ENCODE measurements at regions of chr1 and their contacts with region 1.

Region 1: DNA sequence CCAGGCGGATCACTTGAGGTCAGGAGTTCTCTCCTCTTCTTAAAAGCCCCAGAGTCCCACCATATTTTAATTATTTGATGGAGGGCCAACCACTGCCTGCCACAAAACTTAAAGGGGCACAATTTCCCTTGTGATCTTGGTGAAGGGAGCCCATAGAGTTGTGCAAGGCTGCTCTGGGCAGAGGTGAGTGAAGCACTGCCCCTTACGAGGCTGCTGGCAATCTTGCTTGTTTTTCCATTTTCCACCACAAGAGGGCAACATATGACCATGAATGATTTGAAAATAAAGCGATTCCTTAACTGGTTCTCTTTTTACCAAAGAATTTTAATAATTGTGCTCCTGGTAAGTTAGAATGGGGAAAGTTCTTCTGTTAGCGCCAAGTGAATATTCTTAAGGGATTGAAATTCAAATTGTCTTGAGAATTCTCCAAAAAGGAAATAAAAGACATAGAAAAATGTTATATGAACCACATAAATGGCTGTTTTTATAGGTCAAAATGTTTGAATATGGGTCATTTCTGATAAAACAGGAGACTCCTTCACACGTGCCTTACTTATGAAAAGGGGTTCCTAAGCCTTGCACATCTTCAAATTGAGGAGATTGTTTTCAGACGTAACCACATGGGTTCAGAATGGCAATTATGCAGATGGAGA is 22.7 kb downstream of the PGM1 start:
- DNase-seq: peak; percentile 50 to 74
- ATAC-seq: peak; percentile 27 to 38
- H3K4me3 ChIP-seq: no peak overlapping the region
- H3K27ac ChIP-seq: peak overlapping the region; percentile 91 to 99 (median 96)
- H3K4me1 ChIP-seq: peaks cover 78 to 94% of the 10 kb centered on the region in 2 donors
- H3K27me3 ChIP-seq: no peaks in the 10 kb centered on the region
- CTCF ChIP-seq: peak; percentile 73 to 86 (median 84)
- POLR2A ChIP-seq: no peak

Region 2: GRCh38 chr1:63575340-63575826 is 40.5 kb before region 1 on chr1:
- in situ Hi-C with region 1: loop called in 2 of 4 experiments (anchors 5 to 10 kb)
- intact Hi-C with region 1: loop called (anchors 5 kb)
- DNase-seq: no peak
- ATAC-seq: peak; percentile 89 to 94
- H3K4me3 ChIP-seq: no peak overlapping the region
- H3K27ac ChIP-seq: peak overlapping the region in 1 of 4 donors; percentile 33
- H3K4me1 ChIP-seq: peaks cover 0 to 5% of the 10 kb centered on the region in 2 donors
- H3K27me3 ChIP-seq: no peaks in the 10 kb centered on the region
- CTCF ChIP-seq: peak; percentile 71 to 92 (median 82)
- POLR2A ChIP-seq: no peak

Region 3: DNA sequence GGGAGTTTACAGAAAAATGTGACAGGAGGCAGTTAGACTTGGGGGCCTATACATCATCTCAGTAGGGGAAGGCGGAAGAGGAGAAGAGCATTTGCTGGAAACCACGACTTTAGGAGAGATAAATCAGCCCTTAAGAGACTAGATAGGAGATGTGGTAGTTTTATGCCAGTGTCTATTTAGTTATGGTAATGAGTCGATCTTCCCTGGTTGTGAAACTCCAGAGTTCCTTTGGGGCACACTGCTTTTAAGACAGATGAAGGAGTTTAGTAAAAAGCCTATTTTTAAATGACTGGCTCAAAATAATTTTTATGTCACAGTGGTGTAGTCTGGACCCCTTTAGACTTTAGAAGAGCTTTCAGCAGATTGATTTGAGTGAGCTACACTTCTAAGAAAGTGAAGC is 14.8 kb before region 1 on chr1:
- in situ Hi-C with region 1: no loop called
- intact Hi-C with region 1: no loop called
- DNase-seq: no peak
- ATAC-seq: no peak
- H3K4me3 ChIP-seq: no peak overlapping the region
- H3K27ac ChIP-seq: peak overlapping the region; percentile 91 to 99 (median 96)
- H3K4me1 ChIP-seq: peaks cover 76 to 77% of the 10 kb centered on the region in 2 donors
- H3K27me3 ChIP-seq: no peaks in the 10 kb centered on the region
- CTCF ChIP-seq: no peak
- POLR2A ChIP-seq: no peak

Region 4: DNA sequence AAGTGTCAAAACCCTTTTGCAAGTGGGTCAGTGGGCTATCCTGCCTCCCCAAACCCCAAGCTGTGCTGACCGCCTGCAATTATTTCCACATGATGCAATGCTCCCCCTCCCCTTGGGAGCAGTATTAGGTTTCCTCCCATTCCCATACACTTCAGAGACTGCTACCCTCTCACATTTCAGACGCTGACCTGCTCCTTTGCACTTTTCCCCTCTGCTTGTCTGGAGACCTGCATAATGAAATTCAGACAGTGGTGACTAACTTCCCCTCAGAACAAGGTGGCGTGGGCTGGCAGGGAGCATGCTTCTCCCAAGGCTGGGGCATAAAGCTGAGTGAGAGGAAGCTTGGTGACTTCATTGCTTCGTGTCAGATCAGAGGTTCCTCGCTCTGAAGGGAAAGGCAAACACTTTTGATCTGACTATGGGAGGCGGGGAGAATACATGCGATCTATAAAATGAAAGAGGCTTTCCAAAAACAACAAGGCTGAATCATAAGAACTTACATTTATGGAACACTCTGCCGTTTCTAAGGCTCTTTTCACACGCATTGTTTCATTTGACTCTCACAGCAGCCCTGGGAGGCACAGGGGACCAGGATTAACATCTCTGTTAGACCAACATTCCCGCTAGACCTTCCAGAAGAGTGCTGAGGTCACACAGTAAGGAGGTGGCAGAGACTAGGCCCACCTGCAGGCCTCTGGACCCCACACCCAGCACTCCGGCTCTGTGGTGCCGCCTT is 130.4 kb after region 1 on chr1:
- in situ Hi-C with region 1: no loop called
- intact Hi-C with region 1: no loop called
- DNase-seq: no peak
- ATAC-seq: peak in 1 of 2 donors; percentile 56
- H3K4me3 ChIP-seq: no peak overlapping the region
- H3K27ac ChIP-seq: no peak overlapping the region
- H3K4me1 ChIP-seq: peaks cover 9 to 13% of the 10 kb centered on the region in 2 donors
- H3K27me3 ChIP-seq: no peaks in the 10 kb centered on the region
- CTCF ChIP-seq: no peak
- POLR2A ChIP-seq: no peak

Region 5: GRCh38 chr1:63773815-63774616 is 158.1 kb after region 1 on chr1 and contains the start of gene ROR1:
- in situ Hi-C with region 1: no loop called
- intact Hi-C with region 1: loop called (anchors 5 kb)
- DNase-seq: peak; percentile 83 to 86
- ATAC-seq: peak; percentile 93 to 95
- H3K4me3 ChIP-seq: peak within 1 kb of the TSS; percentile 68 to 89 (median 74)
- H3K27ac ChIP-seq: peak within 1 kb of the TSS; percentile 78 to 86 (median 85)
- H3K4me1 ChIP-seq: peaks cover 7 to 23% of the 10 kb centered on the region in 2 donors
- H3K27me3 ChIP-seq: no peaks in the 10 kb centered on the region
- CTCF ChIP-seq: peak; percentile 39 to 82 (median 67)
- POLR2A ChIP-seq: peak; percentile 37 to 57
- total RNA-seq, gene ROR1: 2.5 to 4.3 (median 3.6) TPM

Region 6: DNA sequence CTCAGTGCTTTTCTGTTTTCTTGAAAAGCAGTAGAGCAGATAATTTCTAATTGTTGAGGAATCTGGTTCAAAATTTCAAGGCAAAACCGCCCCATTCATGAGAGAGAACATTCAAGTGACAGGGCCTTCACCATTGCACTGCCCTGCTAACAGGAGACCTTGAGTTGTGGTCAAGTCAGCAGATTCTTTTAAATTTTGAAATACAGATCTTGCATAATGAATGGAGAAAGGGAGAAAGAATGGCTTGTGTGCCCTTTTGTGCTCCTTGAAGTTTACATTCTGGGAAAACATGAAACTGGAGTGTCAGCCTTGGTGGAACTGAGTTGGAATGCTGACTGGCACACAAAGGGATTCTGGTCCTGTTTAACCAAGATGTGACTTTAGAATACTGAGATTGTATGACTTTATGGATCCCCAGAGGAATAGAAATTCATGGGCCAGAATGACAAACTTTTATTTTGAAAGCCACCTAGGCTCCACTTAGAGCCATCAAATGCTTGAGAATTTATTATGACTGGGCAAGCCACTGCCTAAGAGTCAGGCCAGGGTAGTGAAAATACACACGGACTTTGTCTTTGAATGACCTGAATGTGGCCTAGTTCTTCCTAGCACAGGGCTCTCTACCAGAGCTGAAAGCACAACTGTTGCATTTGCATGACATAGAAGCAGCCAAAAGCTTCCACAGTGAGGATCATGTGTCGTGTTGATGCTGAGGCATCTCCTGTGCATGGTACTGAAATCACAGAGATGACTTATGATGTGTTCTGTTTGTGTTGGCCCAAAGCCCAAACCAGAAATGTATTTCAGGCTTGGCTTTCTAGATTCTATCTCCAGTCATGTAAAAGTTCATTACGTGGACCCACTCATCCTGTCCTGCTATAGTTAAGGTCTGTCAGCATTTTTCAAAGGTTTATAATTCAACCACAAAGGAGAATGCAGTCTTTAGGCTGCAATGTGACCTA is 423.4 kb after region 1 on chr1:
- in situ Hi-C with region 1: no loop called
- intact Hi-C with region 1: loop called (anchors 5 kb)
- DNase-seq: peak; percentile 92 to 94
- ATAC-seq: peak; percentile 93 to 94
- H3K4me3 ChIP-seq: no peak overlapping the region
- H3K27ac ChIP-seq: peak overlapping the region; percentile 83 to 95 (median 84)
- H3K4me1 ChIP-seq: peaks cover 51 to 57% of the 10 kb centered on the region in 2 donors
- H3K27me3 ChIP-seq: no peaks in the 10 kb centered on the region
- CTCF ChIP-seq: no peak
- POLR2A ChIP-seq: peak in 1 of 2 donors; percentile 65

Region 7: DNA sequence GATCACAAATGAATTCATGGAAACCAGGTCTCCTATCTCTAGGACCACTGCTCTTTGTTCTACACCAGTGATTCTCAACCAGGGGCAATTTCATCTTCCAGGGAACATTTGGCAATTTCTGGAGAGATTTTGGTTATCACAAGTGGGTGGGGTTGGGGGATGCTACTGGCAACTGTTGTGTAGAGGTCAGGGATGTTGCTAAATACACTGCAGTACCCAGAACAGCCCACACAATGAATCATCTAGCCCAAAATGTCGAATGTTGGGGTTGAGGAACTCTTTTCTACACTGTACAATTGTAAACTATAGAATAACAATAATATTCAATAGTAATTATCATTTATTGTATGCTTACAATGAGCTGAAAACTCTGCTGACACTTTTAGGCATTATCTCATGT is 531.9 kb after region 1 on chr1:
- in situ Hi-C with region 1: loop called in 1 of 4 experiments (anchors 10 kb)
- intact Hi-C with region 1: no loop called
- DNase-seq: no peak
- ATAC-seq: no peak
- H3K4me3 ChIP-seq: no peak overlapping the region
- H3K27ac ChIP-seq: no peak overlapping the region
- H3K4me1 ChIP-seq: no peaks in the 10 kb centered on the region
- H3K27me3 ChIP-seq: no peaks in the 10 kb centered on the region
- CTCF ChIP-seq: no peak
- POLR2A ChIP-seq: no peak

Region 8: DNA sequence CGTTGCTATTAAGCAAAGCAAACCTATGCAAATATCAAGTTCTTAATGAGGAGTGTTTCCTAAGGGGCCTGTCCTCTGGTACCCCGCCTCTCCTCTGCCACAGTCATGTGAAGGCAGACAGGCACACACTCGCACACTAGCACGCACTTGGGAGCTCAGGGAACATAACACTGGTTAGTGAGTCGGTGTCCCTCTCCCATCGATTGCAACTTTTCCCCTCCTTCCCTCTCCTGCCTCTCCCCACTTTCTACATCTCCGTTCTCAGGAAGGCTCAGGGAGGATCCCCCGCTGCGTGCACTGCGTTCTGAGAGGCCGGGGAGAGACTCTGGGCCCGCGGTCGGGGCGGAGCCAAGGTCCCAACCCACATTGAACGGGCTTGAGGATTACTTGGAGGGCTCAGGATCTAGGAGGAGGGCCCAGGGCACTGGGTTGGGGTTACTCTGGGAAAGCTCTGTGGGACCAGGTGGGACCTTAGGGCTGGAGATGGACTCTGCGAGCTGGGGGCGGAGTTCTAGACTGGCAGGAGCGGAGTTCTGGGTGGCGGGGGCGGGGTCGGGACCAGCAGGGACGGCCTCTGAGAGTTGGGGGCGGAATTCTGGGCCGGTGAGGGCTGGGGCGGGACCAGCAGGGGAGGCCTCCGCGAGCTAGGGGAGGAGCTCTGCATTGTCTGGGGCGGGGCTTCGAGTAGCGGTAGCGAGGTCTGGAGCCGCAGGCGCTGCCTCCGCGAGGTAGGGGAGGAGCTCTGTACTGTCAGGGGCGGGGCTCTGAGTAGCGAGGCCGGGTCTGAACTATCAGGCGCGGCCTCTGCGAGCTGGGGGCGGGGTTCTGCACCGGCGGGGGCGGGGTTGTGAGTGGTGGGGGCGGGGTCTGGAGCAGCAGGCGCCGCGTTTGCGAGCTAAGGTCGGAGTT is 1804.0 kb after region 1 on chr1:
- in situ Hi-C with region 1: no loop called
- intact Hi-C with region 1: loop called (anchors 10 kb)
- DNase-seq: peak; percentile 98
- ATAC-seq: peak; percentile 84 to 85
- H3K4me3 ChIP-seq: peak overlapping the region; percentile 58 to 86 (median 72)
- H3K27ac ChIP-seq: peak overlapping the region; percentile 94 to 97 (median 96)
- H3K4me1 ChIP-seq: peaks cover 22 to 30% of the 10 kb centered on the region in 2 donors
- H3K27me3 ChIP-seq: no peaks in the 10 kb centered on the region
- CTCF ChIP-seq: no peak
- POLR2A ChIP-seq: peak; percentile 22 to 26

Measured in gastrocnemius medialis (tissue), 4 donors.